Activated CD4-positive, alpha-beta T cell treated with anti-CD3 and anti-CD28 coated beads, Interleukin-2, amount 10 ng/mL, durations not matched to agents 24 days and 14 days (primary cell): ENCODE measurements at regions of chr6 and their contacts with region 1.

Region 1: DNA sequence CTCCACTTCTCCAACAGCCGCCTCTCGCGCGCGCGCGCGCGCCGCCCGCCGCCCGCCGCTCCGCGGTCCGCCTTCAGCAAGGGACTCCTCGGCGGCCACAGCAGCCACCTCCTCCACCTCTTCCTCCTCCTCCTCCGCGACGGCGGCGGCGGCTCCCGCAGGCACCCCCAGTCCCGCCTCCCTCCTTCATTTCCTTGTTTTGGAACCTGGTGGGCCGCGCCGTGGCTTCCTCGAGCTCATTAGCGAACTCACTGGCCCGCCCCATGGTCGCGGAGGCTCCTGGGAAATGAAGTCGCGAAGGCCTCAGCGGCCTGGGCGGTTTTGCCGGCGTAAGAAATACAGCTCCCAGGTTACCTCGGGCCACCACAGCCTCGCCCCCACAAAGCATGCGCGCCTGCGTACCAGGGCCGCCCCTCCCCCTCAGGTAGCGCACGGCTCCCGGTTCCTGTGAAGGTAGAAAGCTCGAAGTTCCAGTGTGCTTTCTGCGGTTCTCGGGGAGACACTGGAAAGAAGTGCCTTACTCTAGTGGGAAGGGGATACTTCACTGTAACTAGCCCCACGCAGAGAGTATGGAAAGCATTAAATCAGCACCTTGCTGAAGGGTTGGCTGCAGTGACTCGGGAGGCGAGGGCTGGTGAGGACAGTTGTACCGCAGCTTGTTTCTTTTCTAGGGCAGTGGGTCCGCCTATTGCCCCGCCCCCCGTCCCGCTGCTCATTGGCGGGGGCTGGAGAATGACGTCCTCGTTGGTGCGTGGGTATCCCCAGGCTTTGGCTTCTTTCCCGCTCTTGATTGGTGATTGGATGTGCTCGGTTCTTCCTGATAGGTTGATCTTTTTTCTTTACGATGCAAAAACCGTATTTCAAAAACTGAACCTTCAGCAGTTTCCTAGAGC is at the start of gene CDK19:
- DNase-seq: peak; percentile 99
- H3K4me3 Mint-ChIP-seq: peak within 1 kb of the TSS; percentile 98
- H3K27ac Mint-ChIP-seq: peak within 1 kb of the TSS; percentile 98
- H3K4me1 Mint-ChIP-seq: peaks cover 45% of the 10 kb centered on the region
- H3K27me3 Mint-ChIP-seq: no peaks in the 10 kb centered on the region
- total RNA-seq, gene CDK19: 13.0 and 15.7 TPM in 2 replicates

Region 2: DNA sequence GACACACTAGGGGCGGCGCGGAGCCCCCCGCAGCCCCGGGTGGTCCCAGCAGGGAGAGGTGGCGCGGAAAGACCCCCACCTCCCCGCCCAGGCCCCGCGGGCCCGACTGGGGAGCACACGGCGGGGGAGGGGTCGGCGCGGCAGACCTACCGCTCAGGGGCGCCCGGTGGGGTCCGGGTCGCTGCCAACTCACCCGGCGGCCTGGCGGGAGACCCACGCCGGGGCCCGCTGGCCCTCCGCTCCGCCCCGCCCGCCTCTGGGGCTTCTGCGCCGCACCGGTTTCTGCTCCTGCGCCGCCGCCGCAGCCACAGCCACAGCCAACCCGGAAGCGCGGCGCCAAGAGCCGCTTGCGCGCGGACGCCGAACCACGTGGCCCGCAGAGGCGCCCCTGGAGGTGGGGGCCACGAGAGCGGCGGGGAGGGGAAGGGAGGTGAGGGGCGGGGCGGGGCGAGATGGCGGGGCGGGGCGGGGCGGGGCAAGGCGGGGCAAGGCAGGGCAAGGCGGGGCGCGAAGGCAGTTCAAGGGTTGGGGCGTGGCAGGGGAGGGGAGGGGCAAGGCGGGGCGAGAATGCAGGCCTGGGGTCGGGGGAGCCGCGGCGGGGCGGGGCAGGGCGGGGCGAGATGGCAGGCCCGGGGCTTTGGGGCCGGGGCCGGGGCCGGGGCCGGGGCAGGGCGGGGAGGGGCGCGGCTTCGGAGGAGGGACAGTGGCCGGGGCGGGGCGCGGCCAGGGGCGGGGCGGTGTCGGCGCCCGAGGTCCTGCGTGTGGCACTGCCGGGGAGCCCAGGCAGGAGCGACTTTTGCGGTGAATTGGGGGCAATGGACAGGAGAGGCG is 1332.3 kb before region 1 on chr6 and contains the start of gene ZBTB24:
- intact Hi-C with region 1: loop called (anchors 10 kb)
- DNase-seq: peak; percentile 97
- H3K4me3 Mint-ChIP-seq: peak within 1 kb of the TSS; percentile 97
- H3K27ac Mint-ChIP-seq: peak within 1 kb of the TSS; percentile 93
- H3K4me1 Mint-ChIP-seq: peaks cover 41% of the 10 kb centered on the region
- H3K27me3 Mint-ChIP-seq: peaks cover 3% of the 10 kb centered on the region
- total RNA-seq, gene ZBTB24: 18.9 and 19.6 TPM in 2 replicates

Region 3: GRCh38 chr6:110682460-110682853 is 133.0 kb before region 1 on chr6:
- intact Hi-C with region 1: loop called (anchors 1 kb)
- DNase-seq: peak; percentile 92
- H3K4me3 Mint-ChIP-seq: no peak overlapping the region
- H3K27ac Mint-ChIP-seq: no peak overlapping the region
- H3K4me1 Mint-ChIP-seq: peaks cover 14% of the 10 kb centered on the region
- H3K27me3 Mint-ChIP-seq: no peaks in the 10 kb centered on the region

Region 4: DNA sequence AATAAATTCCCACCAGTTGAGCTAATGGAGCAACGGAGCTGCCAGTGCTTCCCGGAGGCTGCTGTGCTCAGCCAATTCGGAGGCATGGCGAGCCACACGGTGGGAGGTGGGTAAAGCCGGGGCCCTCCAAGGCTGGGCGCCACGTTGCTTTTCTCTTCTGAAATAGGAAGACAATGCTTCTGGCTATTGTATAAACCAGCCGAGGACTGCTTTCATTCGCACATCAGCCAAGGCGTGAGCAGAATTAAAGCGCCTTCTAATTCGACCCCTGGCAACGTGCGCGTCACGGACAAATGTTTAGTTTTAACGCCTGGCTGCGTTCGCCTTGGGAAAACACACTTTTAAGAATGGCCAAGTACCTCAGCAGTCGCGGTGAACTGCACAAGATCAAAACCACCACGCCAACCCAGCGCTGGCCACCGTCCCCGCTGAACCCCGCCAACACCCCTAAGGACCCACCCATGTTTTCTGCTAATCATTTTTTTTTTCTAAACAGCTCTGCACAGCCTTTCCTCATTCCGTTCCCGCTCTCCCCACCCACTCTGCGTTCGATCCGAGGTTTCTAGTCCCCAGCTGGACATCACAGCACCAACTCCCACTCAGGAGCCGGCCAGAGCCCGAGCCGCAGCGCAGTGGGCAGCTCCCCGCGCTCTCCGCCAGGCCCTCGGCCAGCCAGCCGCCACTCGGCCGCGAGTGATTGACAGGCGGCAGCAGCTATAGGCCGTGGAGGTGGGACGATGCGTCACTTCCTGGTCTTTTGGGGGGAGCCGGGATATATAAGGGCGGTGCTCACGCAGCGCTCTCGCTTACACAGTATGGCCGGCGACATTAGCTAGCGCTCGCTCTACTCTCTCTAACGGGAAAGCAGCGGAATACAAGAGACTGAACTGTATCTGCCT is 58.8 kb after region 1 on chr6 and contains the start of gene AMD1:
- intact Hi-C with region 1: loop called (anchors 1 kb)
- DNase-seq: peak; percentile 98
- H3K4me3 Mint-ChIP-seq: peak within 1 kb of the TSS; percentile 98
- H3K27ac Mint-ChIP-seq: peak within 1 kb of the TSS; percentile 99
- H3K4me1 Mint-ChIP-seq: peaks cover 27% of the 10 kb centered on the region
- H3K27me3 Mint-ChIP-seq: no peaks in the 10 kb centered on the region
- total RNA-seq, gene AMD1: 108 and 113 TPM in 2 replicates

Region 5: GRCh38 chr6:110958329-110959192 is 143.1 kb after region 1 on chr6 and contains the start of gene GTF3C6:
- intact Hi-C with region 1: loop called (anchors 1 kb)
- DNase-seq: peak; percentile 98
- H3K4me3 Mint-ChIP-seq: peak within 1 kb of the TSS; percentile 93
- H3K27ac Mint-ChIP-seq: peak within 1 kb of the TSS; percentile 97
- H3K4me1 Mint-ChIP-seq: peaks cover 12% of the 10 kb centered on the region
- H3K27me3 Mint-ChIP-seq: no peaks in the 10 kb centered on the region
- total RNA-seq, gene GTF3C6: 145 and 146 TPM in 2 replicates